Natural killer cell (primary cell): ENCODE measurements at regions of chr9 and their contacts with region 1.

Region 1: GRCh38 chr9:116987721-116988485 is 300.8 kb downstream of the TRIM32 start:
- DNase-seq: no peak
- ATAC-seq: peak in 1 of 3 donors; percentile 34
- H3K4me3 ChIP-seq: no peak overlapping the region
- H3K4me3 Mint-ChIP-seq: no peak overlapping the region
- H3K27ac ChIP-seq: no peak overlapping the region
- H3K27ac Mint-ChIP-seq: no peak overlapping the region
- H3K4me1 ChIP-seq: peaks cover 4% of the 10 kb centered on the region
- H3K4me1 Mint-ChIP-seq: peaks cover 0 to 30% of the 10 kb centered on the region in 2 donors
- H3K27me3 ChIP-seq: no peaks in the 10 kb centered on the region
- H3K27me3 Mint-ChIP-seq: peaks cover 0 to 3% of the 10 kb centered on the region in 2 donors
- CTCF ChIP-seq: no peak

Region 2: DNA sequence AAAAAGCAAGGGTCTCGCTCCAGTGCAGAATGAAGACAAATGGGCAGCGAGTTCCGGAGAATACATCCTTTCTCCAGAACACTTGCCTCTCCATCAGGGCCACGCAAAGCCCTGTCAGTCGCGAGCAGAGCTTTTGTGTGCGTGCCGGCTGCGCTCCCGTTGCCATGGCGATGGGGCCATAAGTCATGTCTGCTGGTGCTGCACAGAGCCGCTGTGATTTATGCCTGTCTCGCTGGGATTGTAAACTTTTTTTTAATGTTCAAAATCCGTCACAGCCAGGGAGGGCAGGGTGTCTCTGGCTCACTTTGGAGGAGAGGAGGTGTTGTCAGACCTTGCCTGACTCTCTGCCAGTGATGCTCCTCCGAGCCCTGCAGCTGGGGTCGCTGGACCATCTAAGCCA is 28.1 kb before region 1 on chr9:
- intact Hi-C with region 1: loop called (anchors 2 kb)
- DNase-seq: no peak
- ATAC-seq: peak in 1 of 3 donors; percentile 29
- H3K4me3 ChIP-seq: no peak overlapping the region
- H3K4me3 Mint-ChIP-seq: no peak overlapping the region
- H3K27ac ChIP-seq: no peak overlapping the region
- H3K27ac Mint-ChIP-seq: peak overlapping the region in 1 of 2 donors; percentile 85
- H3K4me1 ChIP-seq: peaks cover 29% of the 10 kb centered on the region
- H3K4me1 Mint-ChIP-seq: peaks cover 9 to 32% of the 10 kb centered on the region in 2 donors
- H3K27me3 ChIP-seq: no peaks in the 10 kb centered on the region
- H3K27me3 Mint-ChIP-seq: no peaks in the 10 kb centered on the region
- CTCF ChIP-seq: no peak

Region 3: GRCh38 chr9:117214416-117214815 is 226.5 kb after region 1 on chr9:
- intact Hi-C with region 1: no loop called
- DNase-seq: no peak
- ATAC-seq: no peak
- H3K4me3 ChIP-seq: no peak overlapping the region
- H3K4me3 Mint-ChIP-seq: no peak overlapping the region
- H3K27ac ChIP-seq: no peak overlapping the region
- H3K27ac Mint-ChIP-seq: no peak overlapping the region
- H3K4me1 ChIP-seq: no peaks in the 10 kb centered on the region
- H3K4me1 Mint-ChIP-seq: no peaks in the 10 kb centered on the region
- H3K27me3 ChIP-seq: no peaks in the 10 kb centered on the region
- H3K27me3 Mint-ChIP-seq: no peaks in the 10 kb centered on the region
- CTCF ChIP-seq: no peak